GM12878 (cell line): ENCODE measurements at regions of chr3 and their contacts with region 1.

Region 1: DNA sequence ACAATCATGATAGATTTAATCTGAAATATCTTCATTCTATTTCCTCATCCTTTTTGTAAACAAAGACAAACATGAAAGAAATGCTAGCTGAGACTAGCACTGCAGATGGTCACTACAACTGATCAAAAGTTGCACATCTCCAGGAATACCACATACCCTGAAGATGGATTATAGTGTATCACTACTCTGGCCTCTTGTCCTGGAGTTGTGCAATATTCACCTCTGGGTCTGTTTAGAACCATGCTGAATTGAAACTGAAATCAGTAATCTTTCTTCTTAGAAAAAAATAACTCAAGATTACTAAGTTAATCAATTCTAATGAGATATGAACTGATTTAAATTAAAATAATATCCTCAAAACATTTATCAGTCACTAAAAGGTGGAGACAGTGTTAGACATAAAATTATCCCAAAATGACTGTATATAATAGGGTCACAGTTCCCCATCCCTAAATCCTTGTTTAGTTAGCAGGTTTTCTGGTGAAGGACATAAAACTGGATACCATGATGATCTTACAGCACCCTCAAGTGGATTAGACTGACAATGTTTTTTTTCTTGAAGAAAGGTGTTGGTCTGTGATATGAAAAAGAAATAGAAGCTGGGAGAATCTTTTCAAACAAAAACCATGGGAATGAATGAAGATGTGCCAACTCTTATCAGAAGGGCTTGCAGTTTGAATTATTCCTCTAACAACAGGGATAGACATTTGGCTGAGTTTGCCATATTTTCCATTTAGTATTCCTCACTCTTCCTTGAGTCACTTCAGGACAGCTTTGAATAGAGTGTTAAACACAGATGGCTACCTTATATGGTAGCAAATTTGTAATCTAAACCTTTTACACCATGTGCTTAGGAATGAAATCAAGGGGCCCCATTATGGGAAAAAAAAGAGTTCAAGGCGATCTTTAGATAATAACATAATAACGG is 7.1 kb upstream of the TTC14 start:
- DNase-seq: peak; percentile 26
- ATAC-seq: peak; percentile 88
- H3K4me3 ChIP-seq: no peak overlapping the region
- H3K27ac ChIP-seq: no peak overlapping the region
- H3K4me1 ChIP-seq: no peaks in the 10 kb centered on the region
- H3K27me3 ChIP-seq: no peaks in the 10 kb centered on the region
- CTCF ChIP-seq: peak; percentile 38 to 72 (median 52); a peak in 5 of 6 replicates
- EP300 ChIP-seq: no peak
- POLR2A ChIP-seq: no peak
- RAD21 ChIP-seq: peak; percentile 91

Region 2: GRCh38 chr3:179750720-179751328 is 844.1 kb before region 1 on chr3:
- CTCF ChIA-PET with region 1: interaction called, 16 read pairs
- POLR2A ChIA-PET with region 1: no interaction called
- RAD21 ChIA-PET with region 1: interaction called, 5 read pairs
- SMC1A ChIA-PET with region 1: interaction called, 6 read pairs
- in situ Hi-C with region 1: loop called (anchors 10 kb)
- intact Hi-C with region 1: loop called (anchors 2 kb)
- DNase-seq: no peak
- ATAC-seq: peak; percentile 68
- H3K4me3 ChIP-seq: no peak overlapping the region
- H3K27ac ChIP-seq: no peak overlapping the region
- H3K4me1 ChIP-seq: no peaks in the 10 kb centered on the region
- H3K27me3 ChIP-seq: no peaks in the 10 kb centered on the region
- CTCF ChIP-seq: peak; percentile 51 to 56 (median 55)
- EP300 ChIP-seq: no peak
- POLR2A ChIP-seq: no peak
- RAD21 ChIP-seq: peak; percentile 71

Region 3: DNA sequence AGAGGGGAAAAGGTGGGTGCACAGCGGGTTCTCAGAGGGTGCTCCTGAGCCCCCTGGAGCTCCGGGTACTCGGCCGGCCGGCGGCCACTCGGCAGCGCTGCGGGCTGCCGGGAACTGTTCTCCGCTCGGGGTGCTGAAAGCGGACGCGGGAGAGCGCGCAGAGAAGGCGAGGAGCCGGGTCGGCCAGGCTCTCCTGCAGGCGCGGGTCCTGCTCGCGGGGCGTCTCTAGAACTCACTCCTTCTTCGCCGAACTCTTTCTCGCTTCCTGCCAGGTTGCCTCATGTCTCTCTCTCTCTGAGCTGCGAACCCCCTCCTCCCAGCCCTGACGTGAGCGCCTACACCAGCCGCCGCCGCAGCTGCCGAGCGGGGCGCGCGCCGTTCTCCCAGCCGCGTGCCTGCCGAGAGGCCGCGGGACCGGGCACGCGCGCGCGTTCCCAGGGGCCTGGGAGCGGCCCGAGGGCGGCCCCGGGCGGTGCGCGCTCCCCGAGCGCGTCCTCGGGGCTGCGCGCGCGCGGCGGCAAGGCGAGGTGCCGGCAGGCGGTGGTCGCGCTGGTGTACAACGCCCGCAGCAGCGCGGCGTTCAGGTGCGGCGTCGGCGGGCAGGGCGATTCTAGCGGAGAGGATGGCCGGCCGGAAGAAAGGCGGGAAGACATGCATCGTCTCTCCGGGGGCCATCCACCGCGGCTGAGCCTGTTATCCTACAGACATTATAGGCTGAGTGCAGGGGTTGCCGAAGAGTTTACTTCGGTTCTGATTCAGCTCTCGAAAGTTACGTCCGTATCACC is 558.0 kb before region 1 on chr3 and contains the start of gene PEX5L:
- CTCF ChIA-PET with region 1: no interaction called
- POLR2A ChIA-PET with region 1: no interaction called
- RAD21 ChIA-PET with region 1: no interaction called
- SMC1A ChIA-PET with region 1: no interaction called
- in situ Hi-C with region 1: no loop called
- intact Hi-C with region 1: loop called (anchors 5 kb)
- DNase-seq: no peak
- ATAC-seq: peak; percentile 93
- H3K4me3 ChIP-seq: peak within 1 kb of the TSS; percentile 65
- H3K27ac ChIP-seq: no peak within 1 kb of the TSS
- H3K4me1 ChIP-seq: peaks cover 5% of the 10 kb centered on the region; the same call in 1 of the 2 replicates
- H3K27me3 ChIP-seq: 0 out of 4 replicates have a peak, but pooled peaks cover 0 to 3% of the 10 kb centered on the region in 2 experiments
- CTCF ChIP-seq: 0 out of 6 replicates have a peak, but pooled peaks of 1 of the 3 experiments have one; percentile 5
- EP300 ChIP-seq: no peak
- POLR2A ChIP-seq: no peak
- RAD21 ChIP-seq: peak; percentile 17; the same call in 1 of the 2 replicates
- polyA plus RNA-seq, gene PEX5L: 0.11 to 0.13 TPM

Region 4: DNA sequence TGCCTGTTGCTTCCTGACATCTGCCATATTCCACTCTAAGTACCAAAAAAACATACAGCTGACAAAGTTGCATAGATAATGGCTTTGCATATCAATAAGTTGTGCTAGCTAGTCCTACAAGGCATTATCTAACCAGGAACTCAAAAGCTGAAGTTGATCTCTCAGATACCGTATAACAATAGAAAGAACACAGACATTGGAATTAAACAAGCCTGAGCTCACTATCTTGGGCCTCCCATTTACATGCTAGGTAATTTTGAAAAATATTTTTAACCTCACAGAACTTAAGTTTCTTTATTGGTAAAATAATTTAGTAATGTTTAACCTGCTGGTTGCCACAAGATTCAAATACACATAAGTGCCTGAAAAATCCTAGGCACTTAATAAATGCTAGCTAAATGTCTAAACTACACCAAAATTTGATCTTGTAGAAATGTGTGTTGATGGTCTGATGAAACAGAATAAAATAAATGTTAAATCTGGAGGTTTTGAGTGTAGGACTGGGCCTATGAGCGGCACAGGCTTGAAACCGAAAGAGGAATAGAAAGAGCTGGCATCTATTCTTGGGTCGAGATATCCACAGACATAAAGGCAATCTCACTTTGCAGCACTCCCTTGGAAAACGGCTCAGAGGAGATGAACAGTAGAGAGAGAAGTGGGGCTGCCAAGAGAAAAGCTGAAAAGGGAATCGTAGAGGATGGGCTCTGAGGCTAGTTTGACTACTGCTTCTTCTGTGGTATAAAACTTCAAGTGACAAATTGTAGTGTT is 22.9 kb before region 1 on chr3:
- CTCF ChIA-PET with region 1: interaction called, 11 read pairs
- POLR2A ChIA-PET with region 1: no interaction called
- RAD21 ChIA-PET with region 1: interaction called, 4 read pairs
- SMC1A ChIA-PET with region 1: interaction called, 3 read pairs
- in situ Hi-C with region 1: no loop called
- intact Hi-C with region 1: no loop called
- DNase-seq: no peak
- ATAC-seq: peak; percentile 94
- H3K4me3 ChIP-seq: no peak overlapping the region
- H3K27ac ChIP-seq: no peak overlapping the region; the same call in 1 of the 2 replicates
- H3K4me1 ChIP-seq: no peaks in the 10 kb centered on the region
- H3K27me3 ChIP-seq: no peaks in the 10 kb centered on the region
- CTCF ChIP-seq: no peak
- EP300 ChIP-seq: no peak
- POLR2A ChIP-seq: no peak
- RAD21 ChIP-seq: no peak